Activated CD4-positive, alpha-beta T cell treated with anti-CD3 and anti-CD28 coated beads, Interleukin-2, amount 10 ng/mL, durations not matched to agents 24 days and 14 days (primary cell): ENCODE measurements at regions of chr9 and their contacts with region 1.

Region 1: DNA sequence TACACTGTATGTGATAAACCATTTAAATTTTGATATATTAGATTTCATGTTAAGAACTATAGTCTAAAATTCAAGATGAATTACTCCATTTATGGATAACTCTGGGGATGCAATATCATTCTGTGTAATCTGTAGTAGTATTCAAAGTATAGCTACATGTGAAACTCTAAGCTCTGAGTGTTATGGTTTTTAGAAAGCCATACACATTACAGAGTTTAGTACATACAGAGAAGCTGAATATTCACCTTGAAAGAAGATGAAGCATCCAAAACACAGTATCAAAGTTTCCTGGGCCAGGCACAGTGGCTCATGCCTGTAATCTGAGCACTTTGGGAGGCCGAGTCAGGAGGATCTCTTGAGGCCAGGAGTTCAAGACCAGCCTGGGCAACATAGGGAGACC is 25.0 kb downstream of the ABHD17B start:
- DNase-seq: no peak
- H3K4me3 Mint-ChIP-seq: no peak overlapping the region
- H3K27ac Mint-ChIP-seq: peak overlapping the region; percentile 73
- H3K4me1 Mint-ChIP-seq: peaks cover 21% of the 10 kb centered on the region
- H3K27me3 Mint-ChIP-seq: no peaks in the 10 kb centered on the region

Region 2: GRCh38 chr9:71795097-71795813 is 90.8 kb before region 1 on chr9:
- intact Hi-C with region 1: no loop called
- DNase-seq: peak; percentile 76
- H3K4me3 Mint-ChIP-seq: peak overlapping the region; percentile 74
- H3K27ac Mint-ChIP-seq: peak overlapping the region; percentile 85
- H3K4me1 Mint-ChIP-seq: peaks cover 32% of the 10 kb centered on the region
- H3K27me3 Mint-ChIP-seq: no peaks in the 10 kb centered on the region

Region 3: DNA sequence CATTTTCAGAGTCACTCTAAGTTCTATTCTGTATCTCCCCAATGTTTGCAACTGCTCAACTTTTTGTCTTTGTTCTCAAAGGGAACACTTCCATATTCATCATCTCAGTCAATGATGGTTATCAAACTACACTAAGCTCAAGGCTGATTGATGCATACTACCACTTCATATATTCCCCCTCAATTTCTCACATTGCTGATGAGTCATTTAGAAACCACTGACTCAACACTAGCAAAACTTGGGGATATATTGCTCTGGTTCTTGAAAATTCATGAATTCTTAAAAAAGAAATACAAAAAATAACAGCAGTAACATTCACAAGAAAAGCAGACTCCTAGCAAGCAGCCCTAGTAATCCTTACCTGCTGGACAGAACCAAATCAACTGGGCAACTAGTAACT is 27.2 kb before region 1 on chr9:
- intact Hi-C with region 1: loop called (anchors 2 kb)
- DNase-seq: peak; percentile 59
- H3K4me3 Mint-ChIP-seq: peak overlapping the region; percentile 8
- H3K27ac Mint-ChIP-seq: peak overlapping the region; percentile 38
- H3K4me1 Mint-ChIP-seq: peaks cover 19% of the 10 kb centered on the region
- H3K27me3 Mint-ChIP-seq: no peaks in the 10 kb centered on the region

Region 4: GRCh38 chr9:71928832-71929604 is 43.0 kb after region 1 on chr9:
- intact Hi-C with region 1: no loop called
- DNase-seq: no peak
- H3K4me3 Mint-ChIP-seq: no peak overlapping the region
- H3K27ac Mint-ChIP-seq: no peak overlapping the region
- H3K4me1 Mint-ChIP-seq: no peaks in the 10 kb centered on the region
- H3K27me3 Mint-ChIP-seq: no peaks in the 10 kb centered on the region

Region 5: DNA sequence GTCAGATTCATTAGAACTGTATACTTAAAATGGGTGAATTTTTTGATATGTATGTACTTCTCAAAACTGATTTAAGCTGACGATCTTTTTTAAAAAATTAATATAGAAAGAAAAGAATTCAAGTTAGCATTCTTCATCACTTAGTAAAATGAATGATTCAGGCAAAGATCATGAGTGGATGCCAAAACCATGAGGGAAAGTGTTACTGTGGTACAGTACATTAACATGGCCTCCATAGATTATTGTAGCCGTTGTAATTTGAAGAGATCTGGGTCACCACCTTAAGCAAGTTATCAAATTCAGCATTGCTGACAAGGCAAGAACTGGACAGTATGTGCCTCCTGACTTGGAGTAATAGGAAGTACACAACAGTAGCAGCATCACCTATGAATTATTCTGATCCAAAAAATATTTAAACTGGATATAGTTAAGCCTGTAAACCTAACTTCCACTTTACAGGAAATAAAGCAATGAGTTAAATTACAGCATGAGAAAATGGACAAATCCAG is 55.1 kb after region 1 on chr9:
- intact Hi-C with region 1: no loop called
- DNase-seq: no peak
- H3K4me3 Mint-ChIP-seq: no peak overlapping the region
- H3K27ac Mint-ChIP-seq: no peak overlapping the region
- H3K4me1 Mint-ChIP-seq: peaks cover 10% of the 10 kb centered on the region
- H3K27me3 Mint-ChIP-seq: no peaks in the 10 kb centered on the region

Region 6: DNA sequence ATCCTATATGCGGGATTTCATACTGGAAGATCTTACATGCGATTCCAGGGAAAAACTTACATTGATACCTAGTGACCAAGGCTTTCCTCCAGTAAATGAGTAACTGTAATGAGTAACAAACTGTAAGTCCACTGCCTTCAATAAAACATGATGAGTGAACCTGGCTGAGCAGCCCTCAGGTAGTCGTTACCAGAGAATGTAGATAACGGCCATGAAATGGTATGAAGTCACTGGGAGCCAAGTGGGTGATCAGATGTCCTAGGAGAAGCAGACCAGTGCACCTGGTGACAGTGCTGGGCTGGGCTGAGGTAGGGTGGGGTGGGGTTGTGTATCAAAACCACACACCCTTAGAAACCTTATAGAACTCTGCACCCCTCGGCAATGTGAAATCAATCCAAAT is 863.3 kb after region 1 on chr9:
- intact Hi-C with region 1: no loop called
- DNase-seq: no peak
- H3K4me3 Mint-ChIP-seq: no peak overlapping the region
- H3K27ac Mint-ChIP-seq: no peak overlapping the region
- H3K4me1 Mint-ChIP-seq: no peaks in the 10 kb centered on the region
- H3K27me3 Mint-ChIP-seq: peaks cover 7% of the 10 kb centered on the region